ENCODE measurements at regions of chr12 and their contacts with region 1.

Region 1: DNA sequence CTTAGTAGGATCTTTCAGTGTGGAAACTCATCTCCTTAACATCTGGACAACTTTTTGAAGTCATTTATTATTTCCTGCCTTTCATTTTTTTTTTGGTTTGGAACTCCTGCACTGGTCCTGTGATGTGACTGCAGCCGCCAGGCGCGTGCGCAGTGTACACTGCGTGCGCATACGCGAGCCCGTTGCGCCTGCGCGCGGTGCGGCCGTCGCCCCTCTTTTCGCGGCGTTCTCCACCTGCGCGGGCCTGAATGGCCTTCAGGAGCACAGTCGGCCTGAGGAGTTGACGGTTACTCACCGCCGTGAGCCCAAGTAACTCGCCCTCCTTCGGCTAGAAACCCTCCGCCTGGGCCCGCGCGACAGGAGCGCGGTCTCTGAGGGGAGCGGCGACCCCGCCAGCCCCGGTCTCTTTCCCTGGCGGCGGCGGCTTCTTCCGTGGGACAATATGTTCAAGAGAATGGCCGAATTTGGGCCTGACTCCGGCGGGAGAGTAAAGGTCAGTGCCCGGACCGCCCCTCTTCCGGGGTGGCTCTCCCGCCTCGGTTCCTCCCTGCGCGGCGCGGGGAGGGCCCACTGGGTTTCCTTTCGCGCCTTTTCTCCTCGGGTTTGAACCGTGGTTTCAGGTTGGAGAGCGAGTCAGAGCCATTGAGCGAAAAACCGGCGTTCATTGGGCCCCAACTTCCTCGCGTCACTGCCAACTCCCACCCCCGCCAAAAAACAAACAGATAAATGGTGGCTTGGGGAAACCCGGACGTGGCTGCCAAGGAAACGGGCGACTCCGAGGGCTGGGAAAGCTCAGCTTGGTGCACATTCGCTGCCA is at the start of gene YEATS4:
- DNase-seq: peak; percentile 86 to 96 (median 88)
- H3K4me3 ChIP-seq: peak within 1 kb of the TSS; percentile 67 to 74
- H3K4me3 Mint-ChIP-seq: peak within 1 kb of the TSS; percentile 83 to 97 (median 93)
- H3K27ac ChIP-seq: peak within 1 kb of the TSS; percentile 86
- H3K27ac Mint-ChIP-seq: peak within 1 kb of the TSS; percentile 82 to 96 (median 94)
- H3K4me1 ChIP-seq: peaks cover 11% of the 10 kb centered on the region
- H3K4me1 Mint-ChIP-seq: peaks cover 24 to 29% (median 27%) of the 10 kb centered on the region in 4 donors
- H3K27me3 ChIP-seq: no peaks in the 10 kb centered on the region
- H3K27me3 Mint-ChIP-seq: peaks cover under 1 to 1% of the 10 kb centered on the region in 2 donors
- total RNA-seq, gene YEATS4: 18.2 to 19.6 TPM

Region 2: GRCh38 chr12:69059483-69060457 is 300.0 kb before region 1 on chr12:
- CTCF ChIA-PET with region 1: no interaction called
- POLR2A ChIA-PET with region 1: no interaction called
- intact Hi-C with region 1: no loop called
- DNase-seq: no peak
- H3K4me3 ChIP-seq: no peak overlapping the region
- H3K4me3 Mint-ChIP-seq: no peak overlapping the region
- H3K27ac ChIP-seq: no peak overlapping the region
- H3K27ac Mint-ChIP-seq: no peak overlapping the region
- H3K4me1 ChIP-seq: no peaks in the 10 kb centered on the region
- H3K4me1 Mint-ChIP-seq: no peaks in the 10 kb centered on the region
- H3K27me3 ChIP-seq: no peaks in the 10 kb centered on the region
- H3K27me3 Mint-ChIP-seq: peaks cover 0 to 4% of the 10 kb centered on the region in 2 donors

Region 3: GRCh38 chr12:69290545-69291277 is 69.0 kb before region 1 on chr12:
- CTCF ChIA-PET with region 1: interaction called, 45 read pairs
- POLR2A ChIA-PET with region 1: interaction called, 3 read pairs
- intact Hi-C with region 1: loop called (anchors 1 kb)
- DNase-seq: peak; percentile 72 to 76 (median 74)
- H3K4me3 ChIP-seq: no peak overlapping the region
- H3K4me3 Mint-ChIP-seq: peak overlapping the region in 1 of 8 donors; percentile 30
- H3K27ac ChIP-seq: no peak overlapping the region
- H3K27ac Mint-ChIP-seq: peak overlapping the region in 1 of 7 donors; percentile 49
- H3K4me1 ChIP-seq: no peaks in the 10 kb centered on the region
- H3K4me1 Mint-ChIP-seq: peaks cover 6 to 9% (median 7%) of the 10 kb centered on the region in 4 donors
- H3K27me3 ChIP-seq: peaks cover 5% of the 10 kb centered on the region
- H3K27me3 Mint-ChIP-seq: peaks cover 25 to 29% of the 10 kb centered on the region in 2 donors

Region 4: DNA sequence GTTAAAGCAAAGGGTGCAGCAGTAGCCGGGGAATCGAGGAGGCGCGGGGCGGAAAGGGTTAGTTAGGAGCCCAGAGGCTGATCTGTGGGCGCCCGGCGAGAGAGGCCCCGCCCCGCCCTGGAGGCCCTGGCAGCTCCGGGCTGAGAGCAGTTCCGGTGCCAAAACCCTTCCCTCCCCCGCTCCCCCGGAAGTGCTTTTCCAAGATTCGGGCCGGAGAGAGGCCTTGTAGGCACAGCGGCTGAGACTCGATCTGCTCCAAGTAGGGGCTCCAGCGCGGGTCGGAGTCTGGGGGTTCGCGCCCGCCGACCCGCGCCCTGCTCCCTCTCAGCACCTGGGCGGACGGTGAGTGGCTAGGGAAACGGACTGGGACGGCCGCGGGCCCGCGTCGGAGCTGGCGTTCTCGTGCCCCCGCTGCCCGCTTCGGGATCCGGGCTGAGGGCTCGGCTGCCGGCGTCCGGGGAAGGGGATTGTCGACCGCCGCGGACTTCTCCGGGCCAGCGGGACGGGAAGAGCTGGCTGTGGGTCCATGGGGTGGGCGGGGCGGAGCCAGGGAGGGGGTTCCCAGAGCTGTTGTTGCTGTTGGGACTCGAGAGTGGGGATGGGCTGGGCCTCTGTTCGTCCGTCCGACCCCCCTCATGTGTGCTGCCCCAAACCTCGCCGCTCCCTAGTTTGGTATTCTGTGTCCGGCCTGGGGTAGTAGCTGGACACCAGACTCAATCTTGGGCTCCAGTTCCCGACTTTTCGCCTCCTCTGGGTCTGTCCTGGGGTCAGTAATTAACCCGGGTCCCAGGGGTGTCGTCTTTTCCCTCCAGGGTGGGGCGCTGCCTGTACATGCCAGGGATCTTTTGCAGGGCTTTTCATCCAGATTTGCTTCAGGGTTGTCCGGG is 110.7 kb after region 1 on chr12 and contains the start of gene FRS2:
- CTCF ChIA-PET with region 1: no interaction called
- POLR2A ChIA-PET with region 1: no interaction called
- intact Hi-C with region 1: loop called (anchors 1 kb)
- DNase-seq: peak; percentile 78 to 87 (median 80)
- H3K4me3 ChIP-seq: peak within 1 kb of the TSS; percentile 71
- H3K4me3 Mint-ChIP-seq: peak within 1 kb of the TSS; percentile 96 to 99 (median 98)
- H3K27ac ChIP-seq: peak within 1 kb of the TSS; percentile 89
- H3K27ac Mint-ChIP-seq: peak within 1 kb of the TSS; percentile 81 to 99 (median 98)
- H3K4me1 ChIP-seq: peaks cover 42% of the 10 kb centered on the region
- H3K4me1 Mint-ChIP-seq: peaks cover 31 to 55% (median 45%) of the 10 kb centered on the region in 4 donors
- H3K27me3 ChIP-seq: no peaks in the 10 kb centered on the region
- H3K27me3 Mint-ChIP-seq: no peaks in the 10 kb centered on the region
- total RNA-seq, gene FRS2: 21.2 to 22.2 TPM

Region 5: GRCh38 chr12:69585189-69586062 is 225.7 kb after region 1 on chr12 and contains the start of gene CCT2:
- CTCF ChIA-PET with region 1: interaction called, 6 read pairs
- POLR2A ChIA-PET with region 1: interaction called, 5 read pairs
- intact Hi-C with region 1: loop called (anchors 1 kb)
- DNase-seq: peak; percentile 91 to 96 (median 96)
- H3K4me3 ChIP-seq: peak within 1 kb of the TSS; percentile 90 to 93
- H3K4me3 Mint-ChIP-seq: peak within 1 kb of the TSS; percentile 94 to 97 (median 95)
- H3K27ac ChIP-seq: peak within 1 kb of the TSS; percentile 95
- H3K27ac Mint-ChIP-seq: peak within 1 kb of the TSS; percentile 96 to 99 (median 98)
- H3K4me1 ChIP-seq: peaks cover 16% of the 10 kb centered on the region
- H3K4me1 Mint-ChIP-seq: peaks cover 5 to 19% (median 10%) of the 10 kb centered on the region in 4 donors
- H3K27me3 ChIP-seq: no peaks in the 10 kb centered on the region
- H3K27me3 Mint-ChIP-seq: no peaks in the 10 kb centered on the region
- total RNA-seq, gene CCT2: 92.6 to 104 TPM

Region 6: GRCh38 chr12:70576346-70577282 is 1216.9 kb after region 1 on chr12:
- CTCF ChIA-PET with region 1: interaction called, 3 read pairs
- POLR2A ChIA-PET with region 1: no interaction called
- intact Hi-C with region 1: loop called (anchors 5 kb)
- DNase-seq: peak in 4 of 5 donors; percentile 38 to 47 (median 42)
- H3K4me3 ChIP-seq: no peak overlapping the region
- H3K4me3 Mint-ChIP-seq: no peak overlapping the region
- H3K27ac ChIP-seq: no peak overlapping the region
- H3K27ac Mint-ChIP-seq: no peak overlapping the region
- H3K4me1 ChIP-seq: no peaks in the 10 kb centered on the region
- H3K4me1 Mint-ChIP-seq: no peaks in the 10 kb centered on the region
- H3K27me3 ChIP-seq: no peaks in the 10 kb centered on the region
- H3K27me3 Mint-ChIP-seq: peaks cover 7 to 18% of the 10 kb centered on the region in 2 donors